ENCODE measurements at regions of chr20 and their contacts with region 1.

Region 1: DNA sequence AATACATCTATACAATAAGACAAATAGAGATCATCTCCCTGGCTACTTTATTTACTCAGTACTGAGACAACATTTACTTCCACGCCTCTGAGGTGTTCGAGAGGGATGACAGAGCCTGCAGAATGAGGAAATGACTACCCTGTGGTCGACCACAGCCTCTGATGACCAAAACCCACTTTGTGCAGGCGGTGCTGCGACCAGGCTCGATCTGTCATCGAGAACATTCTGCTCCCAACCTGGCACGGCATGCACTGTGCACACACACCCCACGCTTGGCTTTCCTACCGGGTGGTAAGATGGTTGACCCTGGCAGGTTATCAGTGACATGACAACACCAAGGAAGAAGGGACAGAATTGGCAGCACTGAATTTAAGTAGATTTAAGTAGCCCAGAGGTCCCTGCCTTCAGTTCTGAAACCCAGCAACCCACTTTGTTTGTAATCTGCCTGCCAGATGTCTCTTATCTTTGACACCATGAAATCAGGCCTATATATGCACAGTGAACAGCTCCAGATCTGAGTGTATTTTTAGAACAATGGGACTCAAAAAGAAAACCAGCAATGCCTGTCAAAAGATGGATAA is 42.6 kb downstream of the TTI1 start:
- DNase-seq: peak in 1 of 4 experiments; percentile 42
- ATAC-seq: no peak
- H3K4me3 ChIP-seq: no peak overlapping the region
- H3K27ac ChIP-seq: no peak overlapping the region
- H3K4me1 ChIP-seq: peaks cover 8 to 10% of the 10 kb centered on the region in 2 experiments; a peak in 3 of 5 replicates
- H3K27me3 ChIP-seq: no peaks in the 10 kb centered on the region
- CTCF ChIP-seq: no peak
- EP300 ChIP-seq: no peak
- POLR2A ChIP-seq: no peak
- RAD21 ChIP-seq: no peak

Region 2: DNA sequence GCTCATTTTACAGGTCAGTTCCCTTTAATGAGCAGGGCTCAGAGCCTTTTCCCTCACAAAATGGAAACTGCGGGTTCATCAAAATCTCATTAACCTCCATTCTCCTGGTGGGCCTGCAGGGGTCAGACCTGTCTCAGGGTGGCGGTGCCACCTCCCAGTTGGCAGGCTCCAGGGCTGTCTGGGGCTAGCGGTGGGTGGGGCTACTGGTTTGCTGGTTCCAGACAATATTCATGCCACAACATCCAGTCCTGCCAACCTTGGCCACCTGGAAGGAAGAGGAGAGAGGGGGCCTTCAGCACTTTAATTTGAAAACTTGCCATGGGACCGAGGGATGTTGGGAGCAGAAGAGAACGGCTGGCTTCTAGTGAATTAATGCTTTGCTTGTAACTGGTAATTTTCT is 338.7 kb before region 1 on chr20:
- CTCF ChIA-PET with region 1: interaction called, 9 read pairs
- POLR2A ChIA-PET with region 1: no interaction called
- in situ Hi-C with region 1: no loop called
- intact Hi-C with region 1: loop called (anchors 10 kb)
- DNase-seq: peak in 3 of 4 experiments; percentile 24 to 30 (median 27)
- ATAC-seq: peak; percentile 74
- H3K4me3 ChIP-seq: no peak overlapping the region
- H3K27ac ChIP-seq: no peak overlapping the region
- H3K4me1 ChIP-seq: no peaks in the 10 kb centered on the region
- H3K27me3 ChIP-seq: peaks cover 6 to 26% of the 10 kb centered on the region in 2 experiments; a peak in 4 of 5 replicates
- CTCF ChIP-seq: peak; percentile 59 to 66 (median 60)
- EP300 ChIP-seq: no peak
- POLR2A ChIP-seq: no peak
- RAD21 ChIP-seq: peak; percentile 44 to 77

Region 3: DNA sequence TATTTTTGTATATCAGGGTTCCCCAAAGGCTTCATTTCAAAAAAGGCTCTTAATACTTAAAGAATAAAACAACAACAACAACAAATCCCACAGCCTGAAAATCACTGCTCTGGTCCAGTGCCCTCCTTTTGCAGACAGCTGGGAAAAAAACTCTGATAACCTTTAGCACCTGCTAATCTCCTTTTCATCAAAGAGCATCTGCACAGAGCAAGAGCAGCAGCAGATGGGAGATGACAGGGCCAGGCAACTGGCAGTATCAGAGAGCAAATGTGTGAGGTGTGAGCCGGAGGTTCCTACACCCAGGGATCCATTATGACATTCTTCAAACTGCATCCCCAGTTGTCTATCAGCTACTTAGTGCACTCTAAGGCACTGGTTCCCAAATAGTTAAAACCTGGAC is 16.9 kb after region 1 on chr20:
- CTCF ChIA-PET with region 1: no interaction called
- POLR2A ChIA-PET with region 1: interaction called, 11 read pairs
- in situ Hi-C with region 1: no loop called
- intact Hi-C with region 1: no loop called
- DNase-seq: no peak
- ATAC-seq: no peak
- H3K4me3 ChIP-seq: no peak overlapping the region
- H3K27ac ChIP-seq: no peak overlapping the region
- H3K4me1 ChIP-seq: peaks cover 1 to 2% of the 10 kb centered on the region in 2 experiments; a peak in 3 of 5 replicates
- H3K27me3 ChIP-seq: no peaks in the 10 kb centered on the region
- CTCF ChIP-seq: no peak
- EP300 ChIP-seq: no peak
- POLR2A ChIP-seq: no peak
- RAD21 ChIP-seq: no peak

Region 4: GRCh38 chr20:38021087-38021772 is 30.6 kb after region 1 on chr20:
- CTCF ChIA-PET with region 1: no interaction called
- POLR2A ChIA-PET with region 1: no interaction called
- in situ Hi-C with region 1: no loop called
- intact Hi-C with region 1: no loop called
- DNase-seq: no peak
- ATAC-seq: no peak
- H3K4me3 ChIP-seq: no peak overlapping the region
- H3K27ac ChIP-seq: no peak overlapping the region
- H3K4me1 ChIP-seq: no peaks in the 10 kb centered on the region
- H3K27me3 ChIP-seq: no peaks in the 10 kb centered on the region
- CTCF ChIP-seq: no peak
- EP300 ChIP-seq: no peak
- POLR2A ChIP-seq: no peak
- RAD21 ChIP-seq: no peak